ENCODE measurements at regions of chr4 and their contacts with region 1.

Region 1: DNA sequence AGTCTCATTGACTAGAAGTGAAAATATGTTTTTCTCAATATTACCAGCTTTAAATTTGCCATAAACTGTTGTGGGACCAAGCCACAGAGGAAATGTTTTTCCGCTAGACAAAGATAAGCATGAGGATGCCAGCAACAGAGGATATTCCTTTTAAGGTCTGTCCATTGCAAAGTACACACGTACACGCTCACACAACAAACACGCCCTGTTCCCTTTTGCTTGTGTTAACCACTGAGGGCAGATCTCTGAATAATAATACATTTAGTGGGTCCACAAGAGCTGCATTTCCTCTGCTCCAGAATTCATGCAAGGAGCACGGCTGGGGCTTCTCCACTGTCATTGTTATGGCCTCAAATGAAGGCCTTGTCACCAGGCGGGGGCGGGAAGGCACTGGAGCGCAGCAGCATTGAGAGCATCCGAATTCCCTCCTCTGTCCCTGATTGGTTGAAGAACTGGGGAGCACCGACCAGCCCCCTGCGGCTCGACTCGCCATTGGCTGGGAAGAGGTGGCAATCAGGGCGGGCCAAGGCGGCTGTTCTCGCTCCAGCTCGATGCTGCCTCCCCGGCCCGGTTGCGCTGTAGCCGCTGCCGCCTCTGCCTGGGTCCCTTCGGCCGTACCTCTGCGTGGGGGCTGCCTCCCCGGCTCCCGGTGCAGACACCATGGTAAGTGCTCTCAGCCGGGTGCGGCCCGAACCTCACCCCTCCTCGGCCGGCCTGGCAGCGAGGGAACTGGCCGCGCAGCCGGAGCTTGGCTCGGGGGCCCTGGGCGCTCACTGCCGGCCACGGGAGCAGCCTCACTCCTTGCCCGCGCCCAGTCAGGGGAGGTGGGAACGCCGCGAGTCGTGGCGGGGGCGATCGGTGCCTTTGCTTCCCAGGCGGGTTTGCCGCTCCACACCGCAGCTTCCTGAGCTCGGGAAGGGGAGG is at the start of gene GUCY1B1:
- DNase-seq: peak; percentile 82 to 97
- H3K4me3 ChIP-seq: peak within 1 kb of the TSS; percentile 80 to 94
- H3K27ac ChIP-seq: peak within 1 kb of the TSS; percentile 93 to 94
- H3K4me1 ChIP-seq: peaks cover 0 to 6% of the 10 kb centered on the region in 2 donors
- H3K27me3 ChIP-seq: no peaks in the 10 kb centered on the region
- CTCF ChIP-seq: peak; percentile 29 to 60 (median 36)
- total RNA-seq, gene GUCY1B1: 34.9 TPM

Region 2: DNA sequence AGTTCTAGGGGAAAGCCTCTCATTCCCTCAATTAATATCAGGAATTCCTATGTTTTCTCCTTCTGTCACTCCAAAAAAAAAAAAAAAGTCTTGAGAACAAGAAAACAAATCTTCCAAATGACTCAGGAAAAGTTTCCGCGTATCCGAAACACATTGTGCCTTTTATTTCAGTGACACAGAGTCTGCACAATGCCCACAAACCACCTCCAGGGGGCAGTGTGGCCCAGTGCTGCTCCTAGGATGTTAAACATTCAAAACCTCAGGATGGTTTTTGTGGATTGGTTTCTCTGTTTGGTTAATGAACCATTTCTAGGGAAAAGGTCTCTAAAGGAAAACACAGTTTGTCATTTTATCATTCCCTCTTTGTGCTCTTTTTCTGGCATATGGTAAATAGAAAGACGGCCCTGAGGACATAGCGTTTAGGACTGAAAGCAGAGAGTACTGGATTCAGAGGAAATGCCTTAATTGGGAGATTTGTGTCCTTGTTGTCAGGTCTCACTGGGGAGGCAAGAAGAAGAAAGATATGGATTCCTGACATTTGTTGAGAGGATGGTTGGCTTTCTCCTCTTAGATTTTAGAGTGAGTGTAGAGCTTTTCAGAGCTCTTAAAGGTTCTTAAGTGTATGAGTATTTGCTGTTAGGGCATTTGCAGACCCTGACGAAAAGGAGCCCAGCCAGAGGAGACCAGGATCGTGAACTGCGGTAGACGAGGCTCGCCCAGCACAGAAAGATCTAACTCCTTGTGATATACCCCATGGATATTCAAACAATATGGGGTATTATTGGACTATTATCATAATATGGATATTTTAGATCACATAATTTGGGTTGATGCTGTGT is 316.3 kb before region 1 on chr4:
- intact Hi-C with region 1: loop called (anchors 2 kb)
- DNase-seq: peak; percentile 35 to 92
- H3K4me3 ChIP-seq: peak overlapping the region in 1 of 2 donors; percentile 42
- H3K27ac ChIP-seq: peak overlapping the region in 1 of 2 donors; percentile 57
- H3K4me1 ChIP-seq: peaks cover 0 to 6% of the 10 kb centered on the region in 2 donors
- H3K27me3 ChIP-seq: no peaks in the 10 kb centered on the region
- CTCF ChIP-seq: peak; percentile 72 to 95 (median 87)

Region 3: DNA sequence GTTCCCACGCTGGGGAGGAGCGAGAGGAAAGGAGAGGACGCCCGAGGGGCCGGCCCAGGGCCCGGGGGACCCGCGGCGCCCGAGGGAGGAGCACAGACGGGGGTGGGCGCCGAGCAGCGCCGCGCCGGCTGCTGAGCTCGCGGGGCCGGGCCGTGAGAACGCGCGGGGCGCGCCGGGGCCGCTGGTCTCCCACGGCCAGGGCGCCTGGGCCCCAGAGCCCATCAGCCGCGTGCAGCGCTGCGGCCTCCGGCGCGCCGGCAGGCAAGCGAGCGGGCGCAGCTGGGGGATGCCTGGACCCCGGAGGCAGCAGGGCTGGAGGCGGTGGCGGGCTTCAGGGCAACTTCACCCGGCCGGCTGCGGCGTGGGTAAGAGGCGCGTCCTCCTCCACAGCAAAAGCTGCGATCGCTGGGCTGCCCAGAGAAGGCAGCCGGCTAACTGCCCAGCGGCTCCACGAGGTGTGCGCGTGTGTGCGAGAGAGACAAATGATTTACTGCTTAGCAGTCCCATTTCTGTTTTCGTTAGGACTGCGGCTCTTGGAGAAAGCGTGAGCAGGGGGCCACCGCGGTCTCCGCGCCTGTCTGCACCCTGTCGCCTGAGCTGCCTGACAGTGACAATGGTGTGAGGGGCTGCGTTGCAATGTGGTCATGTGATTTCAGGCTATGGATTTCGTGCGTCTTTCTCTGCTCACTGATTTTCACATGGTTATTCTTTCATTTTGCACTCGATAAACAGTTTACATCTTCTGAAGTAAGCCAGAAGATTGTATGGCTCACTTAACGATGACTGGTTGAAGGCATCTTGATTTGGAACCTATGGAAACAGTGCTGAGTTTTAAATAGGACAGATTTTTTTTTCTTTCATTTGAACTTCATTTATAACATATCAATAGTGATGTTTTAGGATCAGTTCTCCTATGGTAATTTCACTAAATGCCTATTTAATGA is 90.9 kb before region 1 on chr4:
- intact Hi-C with region 1: loop called (anchors 2 kb)
- DNase-seq: peak in 1 of 2 donors; percentile 73
- H3K4me3 ChIP-seq: peak overlapping the region; percentile 58 to 85
- H3K27ac ChIP-seq: peak overlapping the region; percentile 90 to 97
- H3K4me1 ChIP-seq: peaks cover 0 to 16% of the 10 kb centered on the region in 2 donors
- H3K27me3 ChIP-seq: no peaks in the 10 kb centered on the region
- CTCF ChIP-seq: no peak

Region 4: DNA sequence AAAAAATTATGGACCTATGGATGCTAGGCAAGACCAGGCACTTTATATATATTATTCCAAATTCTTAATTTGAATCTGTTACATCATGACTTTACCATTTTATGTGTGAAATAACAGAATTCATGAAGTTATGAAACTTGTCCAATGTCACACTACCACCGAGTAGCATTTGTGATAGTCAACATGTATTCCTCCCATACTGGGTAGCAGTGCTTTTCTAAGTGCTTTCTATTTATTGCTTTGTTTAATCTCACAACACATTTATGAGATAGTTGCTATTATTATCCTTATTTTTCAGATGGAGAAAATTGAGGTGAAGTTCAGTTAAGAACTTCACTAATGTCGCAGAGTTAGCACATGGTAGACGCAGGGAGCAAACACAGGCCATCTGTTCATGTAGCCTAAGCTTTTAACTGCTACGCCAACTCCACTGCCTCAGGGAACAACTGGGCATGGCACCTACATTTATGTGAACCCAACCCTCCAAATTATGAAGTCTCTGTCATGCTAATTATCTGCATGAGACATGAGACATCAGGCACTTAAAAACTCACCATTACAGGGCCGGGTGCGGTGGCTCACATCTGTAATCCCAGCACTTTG is 71.3 kb before region 1 on chr4:
- intact Hi-C with region 1: no loop called
- DNase-seq: no peak
- H3K4me3 ChIP-seq: no peak overlapping the region
- H3K27ac ChIP-seq: no peak overlapping the region
- H3K4me1 ChIP-seq: peaks cover 3 to 28% of the 10 kb centered on the region in 2 donors
- H3K27me3 ChIP-seq: no peaks in the 10 kb centered on the region
- CTCF ChIP-seq: no peak

Region 5: GRCh38 chr4:155799116-155799793 is 40.5 kb after region 1 on chr4:
- intact Hi-C with region 1: loop called (anchors 2 kb)
- DNase-seq: no peak
- H3K4me3 ChIP-seq: no peak overlapping the region
- H3K27ac ChIP-seq: peak overlapping the region; percentile 52 to 75
- H3K4me1 ChIP-seq: peaks cover 0 to 7% of the 10 kb centered on the region in 2 donors
- H3K27me3 ChIP-seq: no peaks in the 10 kb centered on the region
- CTCF ChIP-seq: no peak

Region 6: GRCh38 chr4:156021298-156021697 is 262.6 kb after region 1 on chr4:
- intact Hi-C with region 1: no loop called
- DNase-seq: no peak
- H3K4me3 ChIP-seq: no peak overlapping the region
- H3K27ac ChIP-seq: no peak overlapping the region
- H3K4me1 ChIP-seq: no peaks in the 10 kb centered on the region
- H3K27me3 ChIP-seq: no peaks in the 10 kb centered on the region
- CTCF ChIP-seq: no peak

Measured in ascending aorta (tissue), 2 donors.